HEK293 (cell line): ENCODE measurements at regions of chr5 and their contacts with region 1.

Region 1: GRCh38 chr5:95921501-95921900 is 40.1 kb downstream of the ELL2 start:
- H3K4me3 ChIP-seq: no peak overlapping the region
- H3K27ac ChIP-seq: no peak overlapping the region
- H3K4me1 ChIP-seq: peaks cover 11% of the 10 kb centered on the region; the same call in 1 of the 2 replicates
- CTCF ChIP-seq: no peak

Region 2: GRCh38 chr5:95853490-95853889 is 68.0 kb before region 1 on chr5:
- CTCF ChIA-PET with region 1: no interaction called
- POLR2A ChIA-PET with region 1: no interaction called
- H3K4me3 ChIP-seq: no peak overlapping the region
- H3K27ac ChIP-seq: no peak overlapping the region
- H3K4me1 ChIP-seq: no peaks in the 10 kb centered on the region
- CTCF ChIP-seq: no peak

Region 3: GRCh38 chr5:95907740-95908706 is 13.5 kb before region 1 on chr5:
- CTCF ChIA-PET with region 1: interaction called, 10 read pairs
- POLR2A ChIA-PET with region 1: no interaction called
- H3K4me3 ChIP-seq: no peak overlapping the region
- H3K27ac ChIP-seq: no peak overlapping the region
- H3K4me1 ChIP-seq: no peaks in the 10 kb centered on the region
- CTCF ChIP-seq: no peak